ENCODE measurements at regions of chr2 and their contacts with region 1.

Region 1: GRCh38 chr2:158024288-158024898 is 77.3 kb upstream of the UPP2 start:
- DNase-seq: peak; percentile 34
- H3K4me3 Mint-ChIP-seq: no peak overlapping the region
- H3K27ac Mint-ChIP-seq: no peak overlapping the region
- H3K4me1 Mint-ChIP-seq: peaks cover 14% of the 10 kb centered on the region
- H3K27me3 Mint-ChIP-seq: peaks cover 11% of the 10 kb centered on the region

Region 2: DNA sequence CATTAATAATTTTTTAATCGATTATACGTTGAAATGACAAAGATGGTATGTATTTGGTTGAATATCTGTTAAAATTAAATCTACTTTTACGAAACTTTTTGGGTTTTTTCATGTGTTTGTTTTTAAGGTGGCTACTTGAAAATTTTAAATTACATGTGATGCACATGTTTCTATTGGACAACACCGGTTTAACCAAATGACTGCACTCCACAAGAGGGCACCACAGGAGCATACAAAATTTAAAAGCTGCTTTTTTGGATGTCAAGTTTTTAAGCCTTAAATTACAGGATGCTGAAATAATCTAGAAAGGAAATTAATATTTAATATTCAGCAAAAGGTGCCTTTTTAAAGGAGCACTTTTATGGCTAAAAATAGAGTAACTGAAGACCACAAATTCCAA is 247.0 kb before region 1 on chr2:
- intact Hi-C with region 1: loop called (anchors 1 kb)
- DNase-seq: peak; percentile 19
- H3K4me3 Mint-ChIP-seq: no peak overlapping the region
- H3K27ac Mint-ChIP-seq: no peak overlapping the region
- H3K4me1 Mint-ChIP-seq: peaks cover 30% of the 10 kb centered on the region
- H3K27me3 Mint-ChIP-seq: no peaks in the 10 kb centered on the region

Region 3: GRCh38 chr2:158745044-158745865 is 720.9 kb after region 1 on chr2:
- intact Hi-C with region 1: loop called (anchors 1 kb)
- DNase-seq: no peak
- H3K4me3 Mint-ChIP-seq: no peak overlapping the region
- H3K27ac Mint-ChIP-seq: no peak overlapping the region
- H3K4me1 Mint-ChIP-seq: no peaks in the 10 kb centered on the region
- H3K27me3 Mint-ChIP-seq: peaks cover 7% of the 10 kb centered on the region

Region 4: GRCh38 chr2:158753641-158754611 is 729.5 kb after region 1 on chr2:
- intact Hi-C with region 1: loop called (anchors 1 kb)
- DNase-seq: peak; percentile 15
- H3K4me3 Mint-ChIP-seq: no peak overlapping the region
- H3K27ac Mint-ChIP-seq: no peak overlapping the region
- H3K4me1 Mint-ChIP-seq: no peaks in the 10 kb centered on the region
- H3K27me3 Mint-ChIP-seq: peaks cover 3% of the 10 kb centered on the region

Region 5: DNA sequence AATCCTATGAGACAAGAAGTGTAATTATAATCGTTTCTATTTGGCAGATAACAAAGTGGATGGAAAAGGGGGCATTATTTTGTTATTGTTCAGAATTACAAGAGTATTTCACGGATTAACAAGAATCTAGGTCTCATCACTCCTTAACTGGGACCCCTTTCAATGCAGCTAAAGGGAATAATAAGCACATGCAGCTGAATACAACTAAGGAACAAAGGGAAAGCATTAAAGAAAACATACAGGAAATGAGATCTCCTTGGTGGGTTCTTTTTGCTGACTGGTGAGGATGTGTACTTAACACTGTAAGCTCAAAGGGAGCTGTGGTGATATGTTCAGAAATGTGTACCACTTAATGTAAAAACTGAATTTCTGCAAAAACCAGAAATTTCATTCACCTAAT is 1402.7 kb after region 1 on chr2:
- intact Hi-C with region 1: no loop called
- DNase-seq: no peak
- H3K4me3 Mint-ChIP-seq: no peak overlapping the region
- H3K27ac Mint-ChIP-seq: no peak overlapping the region
- H3K4me1 Mint-ChIP-seq: no peaks in the 10 kb centered on the region
- H3K27me3 Mint-ChIP-seq: no peaks in the 10 kb centered on the region